Posterior vena cava (tissue), 2 donors: ENCODE measurements at regions of chr11 and their contacts with region 1.

Region 1: GRCh38 chr11:68659158-68659921 is 25.0 kb upstream of the GAL start:
- DNase-seq: peak; percentile 91

Region 2: DNA sequence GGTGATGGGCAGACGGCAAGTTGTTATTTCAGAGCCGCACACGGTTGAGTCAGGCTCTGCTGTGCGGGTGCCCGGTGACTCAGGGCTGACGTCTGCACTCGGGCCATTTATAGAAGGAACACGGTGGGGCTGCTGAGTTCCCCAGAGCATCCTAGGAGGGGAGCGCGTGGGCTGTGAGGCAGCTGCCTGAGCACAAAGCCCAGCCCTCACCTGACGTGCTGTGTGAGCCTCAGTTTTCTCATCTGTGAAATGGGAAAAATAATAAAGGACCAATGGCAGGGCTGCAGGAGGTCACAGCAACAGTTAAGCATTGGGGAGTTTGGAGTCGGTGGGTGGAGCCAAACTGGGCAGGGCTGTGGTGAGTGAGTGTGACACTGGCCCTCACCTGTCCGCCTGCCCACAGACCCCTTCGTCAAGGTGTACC is 1614.0 kb before region 1 on chr11:
- intact Hi-C with region 1: loop called in 1 of 2 experiments (anchors 5 kb)
- DNase-seq: no peak